ENCODE measurements at regions of chr15 and their contacts with region 1.

Region 1: GRCh38 chr15:88657326-88658069 is 18.7 kb downstream of the ISG20 start:
- DNase-seq: no peak
- ATAC-seq: peak; percentile 72

Region 2: GRCh38 chr15:88115486-88116152 is 541.9 kb before region 1 on chr15:
- intact Hi-C with region 1: no loop called
- DNase-seq: peak; percentile 29 to 35
- ATAC-seq: peak; percentile 93

Region 3: GRCh38 chr15:88821993-88822392 is 164.5 kb after region 1 on chr15:
- intact Hi-C with region 1: loop called in 1 of 2 experiments (anchors 5 kb)
- DNase-seq: no peak
- ATAC-seq: no peak

Region 4: GRCh38 chr15:88834211-88834812 is 176.8 kb after region 1 on chr15:
- intact Hi-C with region 1: loop called (anchors 5 to 10 kb)
- DNase-seq: peak in 1 of 2 donors; percentile 39
- ATAC-seq: no peak